ENCODE measurements at regions of chr4 and their contacts with region 1.

Region 1: DNA sequence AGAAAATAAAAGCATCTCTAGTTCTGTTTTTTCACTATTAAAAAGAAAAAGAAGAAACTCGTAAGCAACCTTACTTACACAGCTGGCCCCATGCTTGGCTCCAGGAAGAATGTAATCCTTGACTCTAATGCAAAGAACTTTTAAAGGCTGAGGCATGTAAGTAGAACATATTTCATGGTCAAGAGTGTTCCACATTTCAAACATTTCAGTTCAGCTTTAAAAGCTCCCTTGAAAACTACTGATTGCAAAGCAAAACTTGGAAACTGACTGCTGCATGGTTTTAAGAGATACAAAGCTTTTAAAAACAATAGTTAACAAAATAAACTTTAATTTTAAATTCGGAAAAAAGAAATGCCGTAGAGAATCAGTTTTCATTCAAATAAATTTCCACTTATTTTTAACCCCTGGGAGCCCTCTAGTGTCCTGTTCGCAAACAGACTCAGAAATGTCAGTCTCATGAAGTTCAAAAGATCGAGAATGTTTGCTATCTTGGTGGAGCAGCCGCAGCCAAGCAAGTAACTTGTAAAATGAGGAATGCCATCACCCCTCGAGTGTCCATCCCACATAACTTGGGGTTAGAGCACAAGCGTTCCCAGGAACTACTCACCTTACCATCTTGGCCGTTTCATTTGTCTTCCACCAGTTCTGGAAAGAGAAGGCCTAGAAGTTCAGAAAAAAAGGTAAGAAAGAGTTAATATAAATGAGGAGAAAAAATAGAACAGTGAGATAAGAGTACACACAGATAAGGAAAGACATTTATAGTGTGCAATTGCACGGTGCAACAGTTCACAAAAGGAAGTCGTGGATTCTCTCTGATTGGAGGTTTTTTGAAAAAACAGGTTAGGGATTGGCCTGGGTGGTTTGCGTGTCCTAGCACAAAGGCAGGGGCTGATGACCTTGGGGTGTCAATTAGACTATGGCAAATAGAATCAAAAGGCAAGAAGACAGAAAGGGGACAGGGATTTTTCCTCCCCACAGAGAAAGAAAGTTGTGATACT is at the start of gene GASK1B:
- ATAC-seq: peak in 4 of 8 experiments; percentile 21 to 76 (median 58)
- H3K4me3 ChIP-seq: peak within 1 kb of the TSS in 1 of 5 donors; percentile 26
- H3K27ac ChIP-seq: no peak within 1 kb of the TSS
- H3K4me1 ChIP-seq: peaks cover 0 to 2% of the 10 kb centered on the region in 2 donors
- total RNA-seq, gene GASK1B: 0.41 to 43.9 (median 1.3) TPM

Region 2: DNA sequence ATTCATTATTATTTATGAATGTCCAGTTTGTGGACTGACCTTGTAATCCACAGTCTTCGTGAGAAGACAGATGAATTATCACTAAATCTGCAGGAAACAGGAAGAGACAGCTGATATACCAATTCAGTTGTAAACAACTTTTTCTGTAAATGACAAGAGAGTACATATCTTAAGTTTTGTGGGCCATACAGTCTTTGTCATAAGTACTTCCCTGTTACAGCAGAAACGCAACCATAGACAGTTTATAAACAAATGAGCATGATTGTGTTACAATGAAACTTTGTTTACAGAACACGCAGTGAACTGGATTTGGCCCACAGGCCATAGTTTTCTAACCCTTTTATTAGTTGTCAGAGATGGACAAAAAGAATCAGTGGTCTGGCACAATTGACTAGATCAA is 1644.3 kb before region 1 on chr4:
- in situ Hi-C with region 1: no loop called
- ATAC-seq: no peak
- H3K4me3 ChIP-seq: no peak overlapping the region
- H3K27ac ChIP-seq: no peak overlapping the region
- H3K4me1 ChIP-seq: no peaks in the 10 kb centered on the region

Region 3: DNA sequence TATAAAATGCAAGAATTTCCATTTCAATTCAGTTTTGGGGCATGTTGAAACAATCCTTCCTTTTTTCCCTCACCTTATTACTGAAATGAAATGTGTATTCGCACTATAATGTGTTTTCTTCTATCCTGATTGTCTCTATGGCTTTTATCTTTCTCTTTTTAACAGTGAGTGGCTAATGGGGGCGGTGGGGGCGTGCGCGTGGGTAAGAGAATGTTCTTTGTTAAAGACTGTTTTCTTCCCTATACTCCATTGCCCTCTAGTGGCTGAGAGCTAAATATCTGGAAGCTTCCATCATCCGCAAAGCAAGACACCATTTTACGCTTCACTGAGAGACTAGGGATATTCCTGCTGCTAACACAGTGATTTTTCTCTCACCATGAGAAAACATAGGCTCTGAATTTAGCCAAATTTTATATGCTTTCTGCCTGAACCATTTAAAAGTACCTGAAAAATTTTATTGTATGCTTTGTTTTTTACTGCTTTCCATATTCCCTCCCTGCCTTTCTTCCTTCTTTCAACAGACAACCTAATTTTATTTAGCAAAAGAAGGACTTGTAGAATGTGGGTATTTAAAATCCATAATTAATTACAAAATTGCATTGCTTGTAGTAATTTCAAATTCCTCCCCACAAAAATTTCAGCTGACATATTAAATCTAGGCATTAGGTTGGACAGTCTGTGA is 193.7 kb before region 1 on chr4:
- in situ Hi-C with region 1: loop called in 2 of 9 experiments (anchors 25 kb)
- ATAC-seq: peak; percentile 82 to 92 (median 90)
- H3K4me3 ChIP-seq: peak overlapping the region in 1 of 5 donors; percentile 8
- H3K27ac ChIP-seq: no peak overlapping the region
- H3K4me1 ChIP-seq: peaks cover 0 to 9% of the 10 kb centered on the region in 2 donors

Region 4: GRCh38 chr4:157992038-157992705 is 180.4 kb before region 1 on chr4:
- in situ Hi-C with region 1: loop called in 4 of 9 experiments (anchors 10 to 25 kb)
- ATAC-seq: peak in 4 of 8 experiments; percentile 19 to 82 (median 62)
- H3K4me3 ChIP-seq: no peak overlapping the region
- H3K27ac ChIP-seq: no peak overlapping the region
- H3K4me1 ChIP-seq: peaks cover 6 to 10% of the 10 kb centered on the region in 2 donors

Region 5: DNA sequence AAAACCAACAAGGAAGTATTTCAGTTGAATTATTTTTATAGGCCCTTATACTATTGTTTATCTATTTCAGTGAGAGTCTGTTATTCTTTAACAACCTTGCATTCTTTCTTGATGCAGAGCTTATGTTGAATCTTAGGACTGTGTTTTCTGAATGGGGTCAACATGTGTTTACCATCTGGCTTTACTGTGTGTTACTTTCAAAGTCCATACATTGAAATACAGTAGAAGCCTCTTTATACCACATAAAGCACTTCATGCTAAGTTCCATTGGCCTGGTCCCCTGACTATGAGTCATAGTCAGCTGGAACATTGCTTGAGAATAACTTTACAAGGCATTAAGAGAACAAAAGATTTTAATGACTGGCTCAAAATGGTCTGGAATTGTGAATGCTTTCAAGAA is 152.4 kb before region 1 on chr4:
- in situ Hi-C with region 1: no loop called
- ATAC-seq: peak; percentile 70 to 96 (median 80)
- H3K4me3 ChIP-seq: no peak overlapping the region
- H3K27ac ChIP-seq: peak overlapping the region in 1 of 2 donors; percentile 62
- H3K4me1 ChIP-seq: peaks cover 29 to 41% of the 10 kb centered on the region in 2 donors

Measured in motor neuron (in vitro differentiated cells).